Left colon (tissue), 2 donors: ENCODE measurements at regions of chr15 and their contacts with region 1.

Region 1: DNA sequence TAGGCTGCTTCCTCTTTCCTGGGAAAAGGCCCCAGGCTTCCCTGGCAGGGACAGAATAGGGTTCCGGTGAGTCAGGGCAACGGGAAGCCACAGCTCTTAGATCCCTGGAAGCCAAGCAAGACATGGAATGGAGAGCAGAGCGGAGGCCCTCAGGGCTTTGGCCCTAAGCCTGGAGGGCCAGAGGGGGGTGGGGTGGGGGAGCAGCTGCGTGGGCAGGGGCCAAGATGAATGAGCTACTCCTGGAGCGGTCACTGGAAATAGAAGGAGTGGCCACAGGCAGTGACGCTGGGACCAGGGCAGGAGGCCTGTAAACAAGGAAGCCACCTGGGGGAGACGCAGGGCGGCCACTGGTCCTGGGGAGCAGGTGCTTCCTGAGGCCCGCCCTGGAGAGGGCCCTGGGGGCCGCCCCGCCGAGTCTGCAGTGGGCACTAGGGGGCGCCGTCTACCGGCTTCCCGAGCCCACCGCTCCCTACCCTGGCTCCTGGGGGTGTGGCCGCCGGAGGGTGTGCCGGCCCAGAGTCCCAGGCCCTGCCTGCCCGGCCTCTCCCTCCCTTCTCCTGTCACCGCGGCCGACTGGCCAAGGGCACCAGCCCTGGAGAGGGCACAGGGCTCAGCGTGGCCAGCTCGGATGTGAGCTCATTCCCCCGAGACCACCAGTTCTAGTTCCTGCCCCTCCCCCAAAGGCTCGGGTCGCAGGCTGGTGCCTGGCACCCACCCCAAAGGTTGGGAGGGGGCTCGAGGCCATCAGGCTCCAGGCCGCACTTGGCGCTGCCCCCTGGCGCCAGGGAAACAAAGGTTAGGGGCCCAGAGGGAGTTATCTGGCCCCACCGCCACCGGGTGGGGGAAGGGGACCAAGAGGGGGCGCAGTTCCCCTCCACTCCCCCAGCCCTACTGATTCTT is 12.1 kb downstream of the VPS18 start:
- DNase-seq: peak; percentile 95 to 96
- ATAC-seq: peak; percentile 80

Region 2: DNA sequence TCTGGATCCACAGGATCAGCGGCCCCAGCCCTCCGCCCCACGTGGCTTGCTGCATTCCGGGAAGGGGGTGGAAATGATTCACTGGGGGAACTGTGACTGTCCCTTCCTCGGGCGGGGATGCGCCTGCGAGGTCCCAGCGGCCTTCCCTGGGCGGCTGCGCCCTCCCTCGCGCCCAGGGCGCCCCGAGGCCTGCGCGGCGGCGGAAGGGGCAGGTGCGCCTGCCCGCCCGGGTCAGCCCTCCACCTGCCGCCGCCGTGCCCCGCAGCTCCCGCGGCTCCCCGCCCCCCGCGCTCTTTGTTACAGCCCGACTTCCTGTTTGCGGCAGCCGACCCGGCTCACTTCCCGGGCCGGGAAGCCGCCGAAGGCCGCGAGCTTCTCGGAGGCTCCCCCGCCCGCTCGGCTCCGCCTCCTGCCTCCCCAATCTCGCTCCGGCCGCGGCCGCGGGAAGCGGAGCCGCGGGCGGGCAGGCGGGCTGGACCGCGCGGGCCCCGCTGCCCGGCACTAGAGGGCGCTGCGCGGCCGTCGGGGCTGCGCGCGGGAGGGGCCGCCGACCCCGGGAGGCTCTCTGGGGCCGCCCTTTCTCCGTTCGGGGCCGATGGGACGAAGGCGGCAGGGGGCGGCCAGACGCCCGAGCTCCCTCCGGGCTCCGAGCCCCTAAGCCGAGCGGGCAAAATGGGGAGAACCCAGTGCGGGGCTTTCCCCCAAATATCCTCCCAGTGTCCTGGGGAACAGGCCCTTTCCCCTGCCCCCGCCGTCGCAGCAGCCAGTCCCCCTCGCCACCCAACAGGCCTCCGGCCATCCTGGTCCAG is 35.4 kb after region 1 on chr15:
- intact Hi-C with region 1: no loop called
- DNase-seq: peak; percentile 76 to 88
- ATAC-seq: peak; percentile 83

Region 3: GRCh38 chr15:40952901-40953712 is 46.8 kb after region 1 on chr15 and contains the start of gene CHAC1:
- intact Hi-C with region 1: no loop called
- DNase-seq: peak; percentile 96 to 98
- ATAC-seq: peak; percentile 86
- total RNA-seq, gene CHAC1: 1.8 to 11.0 TPM

Region 4: GRCh38 chr15:41018502-41018901 is 112.2 kb after region 1 on chr15:
- intact Hi-C with region 1: loop called in 1 of 2 experiments (anchors 2 kb)
- DNase-seq: peak; percentile 31 to 36
- ATAC-seq: peak; percentile 92

Region 5: GRCh38 chr15:41180206-41180789 is 274.0 kb after region 1 on chr15:
- intact Hi-C with region 1: loop called (anchors 5 to 10 kb)
- DNase-seq: no peak
- ATAC-seq: no peak